Ascending aorta (tissue), 2 donors: ENCODE measurements at regions of chrX and their contacts with region 1.

Region 1: GRCh38 chrX:129726307-129727111 is 12.3 kb upstream of the XPNPEP2 start:
- DNase-seq: peak in 1 of 2 donors; percentile 75
- H3K4me3 ChIP-seq: no peak overlapping the region
- H3K27ac ChIP-seq: no peak overlapping the region
- H3K4me1 ChIP-seq: no peaks in the 10 kb centered on the region
- H3K27me3 ChIP-seq: no peaks in the 10 kb centered on the region
- CTCF ChIP-seq: peak; percentile 57 to 72 (median 70)

Region 2: GRCh38 chrX:129606918-129607317 is 119.6 kb before region 1 on chrX:
- intact Hi-C with region 1: loop called (anchors 1 kb)
- DNase-seq: peak in 1 of 2 donors; percentile 70
- H3K4me3 ChIP-seq: no peak overlapping the region
- H3K27ac ChIP-seq: no peak overlapping the region
- H3K4me1 ChIP-seq: no peaks in the 10 kb centered on the region
- H3K27me3 ChIP-seq: no peaks in the 10 kb centered on the region
- CTCF ChIP-seq: peak; percentile 75 to 80 (median 77)

Region 3: DNA sequence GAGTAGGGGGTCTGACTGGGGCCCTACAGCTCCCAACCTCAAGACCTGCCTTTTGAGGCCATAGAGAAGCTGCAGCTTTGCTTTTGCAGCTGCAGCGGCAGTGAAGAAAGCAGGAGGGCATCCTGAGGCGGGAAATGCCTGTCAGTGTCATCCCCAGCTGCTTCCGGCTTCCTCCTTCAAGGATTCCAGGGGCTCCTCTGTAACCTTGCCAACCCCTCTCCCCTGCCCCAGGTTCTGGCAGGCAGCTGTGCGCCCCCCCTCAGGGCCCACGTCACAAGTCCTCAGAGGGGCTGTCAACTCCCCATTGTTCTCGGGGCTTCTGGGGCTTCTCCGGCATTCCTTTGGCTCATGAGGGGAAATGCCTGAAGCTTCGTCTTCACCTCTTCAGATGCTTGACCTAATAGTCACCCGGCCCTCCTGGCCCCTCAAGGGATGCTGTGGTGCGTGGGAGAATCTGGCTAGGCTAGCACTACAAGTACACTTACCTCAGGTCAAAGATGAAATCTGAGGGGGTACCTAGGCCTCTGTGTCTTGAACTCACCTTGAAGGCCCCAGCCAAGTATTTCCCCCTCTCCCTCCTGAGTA is 103.7 kb before region 1 on chrX:
- intact Hi-C with region 1: no loop called
- DNase-seq: no peak
- H3K4me3 ChIP-seq: no peak overlapping the region
- H3K27ac ChIP-seq: no peak overlapping the region
- H3K4me1 ChIP-seq: no peaks in the 10 kb centered on the region
- H3K27me3 ChIP-seq: no peaks in the 10 kb centered on the region
- CTCF ChIP-seq: no peak

Region 4: GRCh38 chrX:129637217-129638109 is 89.0 kb before region 1 on chrX:
- intact Hi-C with region 1: loop called (anchors 1 kb)
- DNase-seq: peak; percentile 24 to 85
- H3K4me3 ChIP-seq: no peak overlapping the region
- H3K27ac ChIP-seq: no peak overlapping the region
- H3K4me1 ChIP-seq: no peaks in the 10 kb centered on the region
- H3K27me3 ChIP-seq: no peaks in the 10 kb centered on the region
- CTCF ChIP-seq: peak; percentile 81 to 91 (median 88)

Region 5: GRCh38 chrX:129654419-129655165 is 71.9 kb before region 1 on chrX and contains the start of gene APLN:
- intact Hi-C with region 1: loop called (anchors 5 kb)
- DNase-seq: peak in 1 of 2 donors; percentile 65
- H3K4me3 ChIP-seq: peak within 1 kb of the TSS; percentile 55 to 61
- H3K27ac ChIP-seq: peak within 1 kb of the TSS; percentile 2 to 9
- H3K4me1 ChIP-seq: no peaks in the 10 kb centered on the region
- H3K27me3 ChIP-seq: no peaks in the 10 kb centered on the region
- CTCF ChIP-seq: no peak
- total RNA-seq, gene APLN: 2.2 TPM

Region 6: GRCh38 chrX:130419263-130419662 is 692.8 kb after region 1 on chrX:
- intact Hi-C with region 1: no loop called
- DNase-seq: no peak
- H3K4me3 ChIP-seq: no peak overlapping the region
- H3K27ac ChIP-seq: no peak overlapping the region
- H3K4me1 ChIP-seq: no peaks in the 10 kb centered on the region
- H3K27me3 ChIP-seq: no peaks in the 10 kb centered on the region
- CTCF ChIP-seq: no peak